ENCODE measurements at regions of chr2 and their contacts with region 1.

Region 1: GRCh38 chr2:83827618-83828017 is 631.5 kb downstream of the SUCLG1 start:
- DNase-seq: no peak
- H3K4me3 Mint-ChIP-seq: no peak overlapping the region
- H3K27ac Mint-ChIP-seq: no peak overlapping the region
- H3K4me1 Mint-ChIP-seq: no peaks in the 10 kb centered on the region
- H3K27me3 Mint-ChIP-seq: no peaks in the 10 kb centered on the region
- CTCF ChIP-seq: no peak

Region 2: DNA sequence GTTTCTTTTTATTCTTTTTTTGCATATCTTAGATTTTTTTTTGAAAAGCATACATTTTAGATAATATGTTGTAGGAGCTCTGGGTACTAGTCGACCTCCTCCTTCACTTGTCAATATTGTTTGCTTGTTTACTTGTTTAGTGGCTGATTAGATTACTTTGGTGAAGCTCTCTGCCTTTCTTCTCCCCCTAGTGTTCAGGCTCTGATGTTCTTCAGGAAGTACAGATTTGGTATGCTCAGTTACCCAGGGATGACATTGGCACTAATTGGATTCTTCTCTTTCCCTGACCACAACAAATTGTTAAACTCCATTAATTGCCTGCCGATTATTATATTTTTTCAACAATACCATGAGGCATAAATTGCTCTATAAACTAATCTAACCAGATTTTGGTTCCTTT is 140.2 kb after region 1 on chr2:
- CTCF ChIA-PET with region 1: no interaction called
- intact Hi-C with region 1: loop called (anchors 5 kb)
- DNase-seq: no peak
- H3K4me3 Mint-ChIP-seq: no peak overlapping the region
- H3K27ac Mint-ChIP-seq: no peak overlapping the region
- H3K4me1 Mint-ChIP-seq: peaks cover 16% of the 10 kb centered on the region
- H3K27me3 Mint-ChIP-seq: no peaks in the 10 kb centered on the region
- CTCF ChIP-seq: peak; percentile 30

Region 3: DNA sequence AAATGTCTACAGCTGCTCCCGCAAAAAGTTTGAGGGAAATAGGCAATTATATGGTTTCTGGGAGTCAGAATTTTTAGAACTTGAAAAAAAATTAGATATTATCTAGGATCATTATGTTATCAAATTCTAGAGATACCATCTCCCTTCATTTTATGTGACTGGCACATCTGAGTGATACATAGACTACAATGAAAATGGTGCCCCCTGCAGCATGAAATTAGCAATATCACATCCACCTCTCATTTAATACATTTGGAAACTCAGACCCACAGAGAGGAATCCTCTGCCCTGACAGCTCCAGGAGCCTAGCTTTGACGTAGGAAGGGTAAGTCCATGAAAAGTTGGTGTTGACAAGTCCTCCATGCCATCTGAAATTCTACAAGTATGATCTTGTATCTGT is 249.9 kb after region 1 on chr2:
- CTCF ChIA-PET with region 1: no interaction called
- intact Hi-C with region 1: loop called (anchors 1 kb)
- DNase-seq: peak; percentile 48
- H3K4me3 Mint-ChIP-seq: no peak overlapping the region
- H3K27ac Mint-ChIP-seq: no peak overlapping the region
- H3K4me1 Mint-ChIP-seq: no peaks in the 10 kb centered on the region
- H3K27me3 Mint-ChIP-seq: peaks cover 13% of the 10 kb centered on the region
- CTCF ChIP-seq: peak; percentile 24

Region 4: GRCh38 chr2:84302513-84303412 is 475.1 kb after region 1 on chr2:
- CTCF ChIA-PET with region 1: no interaction called
- intact Hi-C with region 1: loop called (anchors 5 kb)
- DNase-seq: peak; percentile 59
- H3K4me3 Mint-ChIP-seq: no peak overlapping the region
- H3K27ac Mint-ChIP-seq: no peak overlapping the region
- H3K4me1 Mint-ChIP-seq: no peaks in the 10 kb centered on the region
- H3K27me3 Mint-ChIP-seq: peaks cover 70% of the 10 kb centered on the region
- CTCF ChIP-seq: peak; percentile 60